HCT116 (cell line): ENCODE measurements at regions of chr13 and their contacts with region 1.

Region 1: DNA sequence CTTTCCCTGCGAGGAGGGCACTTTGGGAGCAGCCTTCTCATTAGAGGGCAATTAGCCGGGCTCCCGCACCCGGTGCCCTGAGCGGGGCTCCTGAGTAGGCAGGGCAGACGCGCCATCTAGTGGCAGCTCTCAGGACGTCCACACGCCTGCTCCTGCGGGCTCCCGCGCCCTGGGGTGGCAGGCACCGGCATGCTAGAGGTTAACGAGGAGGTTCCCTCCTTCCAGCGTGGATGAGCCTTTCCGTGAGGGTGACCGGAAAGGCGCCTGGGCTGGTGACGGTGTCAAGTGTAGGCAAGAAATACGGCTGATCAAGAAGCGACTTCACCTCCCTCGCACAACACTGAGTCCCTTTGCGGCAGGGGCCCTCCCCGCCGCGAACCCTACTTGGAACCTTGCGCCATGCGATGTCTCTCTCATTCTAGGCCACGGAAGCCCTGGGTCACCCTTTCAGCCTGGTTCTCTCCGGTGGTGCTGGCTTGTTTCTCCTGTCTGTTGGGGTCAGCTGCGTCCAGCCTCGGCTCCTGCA is 67.7 kb downstream of the ALOX5AP start:
- DNase-seq: peak; percentile 60
- ATAC-seq: peak; percentile 92
- H3K4me3 ChIP-seq: no peak overlapping the region
- H3K27ac ChIP-seq: no peak overlapping the region
- H3K4me1 ChIP-seq: peaks cover 26 to 47% of the 10 kb centered on the region in 2 experiments
- H3K27me3 ChIP-seq: no peaks in the 10 kb centered on the region
- CTCF ChIP-seq: peak; percentile 68 to 89 (median 87)
- POLR2A ChIP-seq: no peak
- RAD21 ChIP-seq: peak; percentile 95

Region 2: GRCh38 chr13:29359181-29359580 is 1443.8 kb before region 1 on chr13:
- CTCF ChIA-PET with region 1: no interaction called
- POLR2A ChIA-PET with region 1: no interaction called
- RAD21 ChIA-PET with region 1: no interaction called
- intact Hi-C with region 1: no loop called
- DNase-seq: no peak
- ATAC-seq: no peak
- H3K4me3 ChIP-seq: no peak overlapping the region
- H3K27ac ChIP-seq: no peak overlapping the region
- H3K4me1 ChIP-seq: no peaks in the 10 kb centered on the region
- H3K27me3 ChIP-seq: peaks cover 51% of the 10 kb centered on the region
- CTCF ChIP-seq: no peak
- POLR2A ChIP-seq: no peak
- RAD21 ChIP-seq: no peak

Region 3: GRCh38 chr13:30114571-30115256 is 688.3 kb before region 1 on chr13:
- CTCF ChIA-PET with region 1: interaction called, 3 read pairs
- POLR2A ChIA-PET with region 1: no interaction called
- RAD21 ChIA-PET with region 1: interaction called in 1 of 2 experiments, 4 read pairs
- intact Hi-C with region 1: loop called (anchors 5 kb)
- DNase-seq: peak; percentile 72
- ATAC-seq: peak; percentile 93
- H3K4me3 ChIP-seq: peak overlapping the region; percentile 44 to 54
- H3K27ac ChIP-seq: peak overlapping the region; percentile 59; the same call in 1 of the 2 replicates
- H3K4me1 ChIP-seq: peaks cover 12 to 25% of the 10 kb centered on the region in 2 experiments
- H3K27me3 ChIP-seq: no peaks in the 10 kb centered on the region; the same call in 1 of the 2 replicates
- CTCF ChIP-seq: peak; percentile 87 to 94 (median 91)
- POLR2A ChIP-seq: peak; percentile 75
- RAD21 ChIP-seq: peak; percentile 85

Region 4: GRCh38 chr13:30341815-30342570 is 461.0 kb before region 1 on chr13:
- CTCF ChIA-PET with region 1: no interaction called
- POLR2A ChIA-PET with region 1: no interaction called
- RAD21 ChIA-PET with region 1: no interaction called
- intact Hi-C with region 1: loop called (anchors 10 kb)
- DNase-seq: peak; percentile 44
- ATAC-seq: peak; percentile 74
- H3K4me3 ChIP-seq: peak overlapping the region; percentile 7 to 39; a peak in 2 of 4 replicates
- H3K27ac ChIP-seq: peak overlapping the region; percentile 54; the same call in 1 of the 2 replicates
- H3K4me1 ChIP-seq: peaks cover 54 to 68% of the 10 kb centered on the region in 2 experiments
- H3K27me3 ChIP-seq: no peaks in the 10 kb centered on the region
- CTCF ChIP-seq: no peak
- POLR2A ChIP-seq: no peak
- RAD21 ChIP-seq: no peak

Region 5: GRCh38 chr13:30617315-30618185 is 185.5 kb before region 1 on chr13 and contains the start of gene USPL1:
- CTCF ChIA-PET with region 1: interaction called, 4 read pairs
- POLR2A ChIA-PET with region 1: interaction called, 3 read pairs
- RAD21 ChIA-PET with region 1: no interaction called
- intact Hi-C with region 1: loop called (anchors 2 kb)
- DNase-seq: peak; percentile 98
- ATAC-seq: peak; percentile 91
- H3K4me3 ChIP-seq: peak within 1 kb of the TSS; percentile 92
- H3K27ac ChIP-seq: peak within 1 kb of the TSS; percentile 97
- H3K4me1 ChIP-seq: peaks cover 18 to 36% of the 10 kb centered on the region in 2 experiments
- H3K27me3 ChIP-seq: no peaks in the 10 kb centered on the region
- CTCF ChIP-seq: no peak
- POLR2A ChIP-seq: peak; percentile 58
- RAD21 ChIP-seq: no peak
- total RNA-seq, gene USPL1: 19.7 TPM

Region 6: GRCh38 chr13:30730526-30730925 is 72.5 kb before region 1 on chr13:
- CTCF ChIA-PET with region 1: no interaction called
- POLR2A ChIA-PET with region 1: no interaction called
- RAD21 ChIA-PET with region 1: no interaction called
- intact Hi-C with region 1: no loop called
- DNase-seq: no peak
- ATAC-seq: no peak
- H3K4me3 ChIP-seq: no peak overlapping the region
- H3K27ac ChIP-seq: no peak overlapping the region
- H3K4me1 ChIP-seq: no peaks in the 10 kb centered on the region
- H3K27me3 ChIP-seq: peaks cover 30% of the 10 kb centered on the region
- CTCF ChIP-seq: no peak
- POLR2A ChIP-seq: no peak
- RAD21 ChIP-seq: no peak

Region 7: GRCh38 chr13:30792285-30793000 is 10.6 kb before region 1 on chr13:
- CTCF ChIA-PET with region 1: interaction called, 12 read pairs
- POLR2A ChIA-PET with region 1: interaction called, 3 read pairs
- RAD21 ChIA-PET with region 1: no interaction called
- intact Hi-C with region 1: no loop called
- DNase-seq: peak; percentile 47
- ATAC-seq: peak; percentile 91
- H3K4me3 ChIP-seq: no peak overlapping the region
- H3K27ac ChIP-seq: peak overlapping the region; percentile 0; the same call in 1 of the 2 replicates
- H3K4me1 ChIP-seq: peaks cover 25 to 33% of the 10 kb centered on the region in 2 experiments
- H3K27me3 ChIP-seq: no peaks in the 10 kb centered on the region; the same call in 1 of the 2 replicates
- CTCF ChIP-seq: peak in 1 of 3 experiments; percentile 26; a peak in 2 of 6 replicates
- POLR2A ChIP-seq: no peak
- RAD21 ChIP-seq: peak; percentile 28; the same call in 1 of the 2 replicates

Region 8: DNA sequence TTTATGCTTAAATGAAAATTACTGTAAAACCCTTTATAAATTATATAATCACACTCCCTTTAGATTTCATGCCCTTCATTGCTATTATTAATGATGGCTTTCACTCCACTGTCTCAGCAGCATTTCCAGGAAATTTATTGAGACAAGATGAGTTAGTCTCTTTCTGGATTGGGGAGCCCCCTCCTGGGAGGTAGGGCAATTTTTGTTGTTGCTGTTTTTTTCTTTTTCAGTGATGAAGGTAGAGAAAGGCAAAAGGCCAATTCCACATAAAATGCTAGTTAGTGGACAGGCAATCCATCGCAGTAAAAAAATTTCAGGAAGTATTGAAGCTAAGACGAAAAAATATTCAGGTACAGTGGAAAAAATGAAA is 209.6 kb after region 1 on chr13:
- CTCF ChIA-PET with region 1: no interaction called
- POLR2A ChIA-PET with region 1: no interaction called
- RAD21 ChIA-PET with region 1: no interaction called
- intact Hi-C with region 1: loop called (anchors 10 kb)
- DNase-seq: no peak
- ATAC-seq: peak; percentile 66
- H3K4me3 ChIP-seq: no peak overlapping the region
- H3K27ac ChIP-seq: no peak overlapping the region
- H3K4me1 ChIP-seq: peaks cover 4 to 5% of the 10 kb centered on the region in 2 experiments; a peak in 1 of 4 replicates
- H3K27me3 ChIP-seq: no peaks in the 10 kb centered on the region
- CTCF ChIP-seq: peak; percentile 42 to 61 (median 48); a peak in 4 of 6 replicates
- POLR2A ChIP-seq: no peak
- RAD21 ChIP-seq: peak; percentile 70